Endothelial cell of umbilical vein (primary cell): ENCODE measurements at regions of chr3 and their contacts with region 1.

Region 1: GRCh38 chr3:194738254-194739093 is 52.8 kb downstream of the FAM43A start:
- DNase-seq: peak; percentile 76
- H3K4me3 ChIP-seq: no peak overlapping the region
- H3K27ac ChIP-seq: peak overlapping the region; percentile 76
- H3K4me1 ChIP-seq: peaks cover 44% of the 10 kb centered on the region
- H3K27me3 ChIP-seq: no peaks in the 10 kb centered on the region
- CTCF ChIP-seq: no peak
- POLR2A ChIP-seq: no peak

Region 2: DNA sequence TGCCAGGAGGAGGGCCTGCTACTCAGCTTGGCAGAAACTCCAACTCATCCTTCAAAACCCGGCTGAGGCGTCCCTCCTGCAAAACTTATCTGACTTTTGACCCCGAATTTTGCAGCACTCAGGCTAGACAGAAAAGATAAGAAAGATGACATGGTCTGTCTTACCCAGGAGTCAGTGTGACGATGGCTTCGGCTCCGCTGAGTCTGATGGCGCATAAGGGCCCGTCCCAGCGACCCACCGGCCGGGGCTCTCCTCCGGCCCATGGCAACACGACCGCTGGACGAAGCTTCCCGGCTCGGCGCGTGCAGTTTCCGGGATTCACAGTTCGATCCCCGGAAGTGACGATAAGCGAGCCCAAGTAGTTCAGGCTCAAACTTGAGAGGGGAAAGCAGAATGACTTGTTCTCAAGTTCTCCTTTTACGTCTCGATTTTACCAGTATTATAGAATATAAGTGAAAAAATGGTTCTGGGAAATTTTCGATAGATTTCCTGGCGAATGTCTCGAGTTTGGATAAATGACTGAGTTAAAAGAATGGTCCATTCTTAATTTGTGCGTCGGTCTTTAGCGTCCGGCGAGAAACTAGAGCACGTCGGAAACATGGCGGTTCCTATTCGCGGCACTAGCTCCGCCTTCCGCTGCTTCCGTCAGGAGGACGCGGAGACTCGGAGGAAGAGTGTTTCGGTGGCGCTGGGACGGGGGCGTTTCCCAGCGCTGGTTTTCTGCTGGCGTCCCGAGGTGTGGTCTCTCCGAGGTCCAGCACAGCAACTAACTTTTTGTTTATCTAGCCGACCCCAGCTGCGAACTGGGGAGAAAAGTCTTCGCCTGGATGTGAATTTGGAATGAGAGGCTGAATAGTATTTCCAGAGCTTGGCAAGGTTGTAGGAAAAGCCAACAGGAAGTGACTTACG is 66.3 kb before region 1 on chr3 and contains the start of gene LSG1:
- CTCF ChIA-PET with region 1: no interaction called
- POLR2A ChIA-PET with region 1: no interaction called
- dilution Hi-C with region 1: no loop called
- intact Hi-C with region 1: no loop called
- DNase-seq: peak; percentile 96
- H3K4me3 ChIP-seq: peak within 1 kb of the TSS; percentile 61 to 97 (median 64)
- H3K27ac ChIP-seq: peak within 1 kb of the TSS; percentile 93
- H3K4me1 ChIP-seq: peaks cover 15% of the 10 kb centered on the region
- H3K27me3 ChIP-seq: peaks cover 0 to 2% of the 10 kb centered on the region in 2 experiments
- CTCF ChIP-seq: no peak
- POLR2A ChIP-seq: peak; percentile 80
- total RNA-seq, gene LSG1: 48.3 and 52.7 TPM in 2 replicates

Region 3: DNA sequence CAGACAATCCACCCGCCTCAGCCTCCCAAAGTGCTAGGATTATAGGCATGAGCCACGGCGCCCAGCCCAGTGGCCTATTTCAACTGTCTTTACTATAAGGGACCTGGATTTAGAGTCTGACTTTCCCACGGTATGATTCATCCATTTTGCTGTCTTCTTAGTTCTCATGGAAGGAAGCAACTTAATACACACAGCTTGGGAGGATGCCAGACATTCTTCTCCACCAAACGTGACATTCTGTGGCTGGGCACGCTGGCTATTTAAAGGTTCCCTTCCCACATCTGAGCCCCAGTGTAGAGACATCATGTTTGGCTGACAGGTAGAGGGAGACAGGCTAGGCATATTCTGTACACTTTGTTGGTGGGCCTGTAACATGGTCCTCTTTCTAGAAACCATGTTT is 26.6 kb before region 1 on chr3:
- CTCF ChIA-PET with region 1: interaction called, 3 read pairs
- POLR2A ChIA-PET with region 1: no interaction called
- dilution Hi-C with region 1: no loop called
- intact Hi-C with region 1: loop called (anchors 1 kb)
- DNase-seq: peak; percentile 97
- H3K4me3 ChIP-seq: no peak overlapping the region
- H3K27ac ChIP-seq: peak overlapping the region; percentile 73
- H3K4me1 ChIP-seq: peaks cover 28% of the 10 kb centered on the region
- H3K27me3 ChIP-seq: no peaks in the 10 kb centered on the region
- CTCF ChIP-seq: no peak
- POLR2A ChIP-seq: no peak

Region 4: GRCh38 chr3:194749631-194750490 is 11.4 kb after region 1 on chr3:
- CTCF ChIA-PET with region 1: no interaction called
- POLR2A ChIA-PET with region 1: no interaction called
- dilution Hi-C with region 1: no loop called
- intact Hi-C with region 1: no loop called
- DNase-seq: peak; percentile 76
- H3K4me3 ChIP-seq: no peak overlapping the region
- H3K27ac ChIP-seq: no peak overlapping the region
- H3K4me1 ChIP-seq: no peaks in the 10 kb centered on the region
- H3K27me3 ChIP-seq: no peaks in the 10 kb centered on the region
- CTCF ChIP-seq: no peak
- POLR2A ChIP-seq: no peak

Region 5: DNA sequence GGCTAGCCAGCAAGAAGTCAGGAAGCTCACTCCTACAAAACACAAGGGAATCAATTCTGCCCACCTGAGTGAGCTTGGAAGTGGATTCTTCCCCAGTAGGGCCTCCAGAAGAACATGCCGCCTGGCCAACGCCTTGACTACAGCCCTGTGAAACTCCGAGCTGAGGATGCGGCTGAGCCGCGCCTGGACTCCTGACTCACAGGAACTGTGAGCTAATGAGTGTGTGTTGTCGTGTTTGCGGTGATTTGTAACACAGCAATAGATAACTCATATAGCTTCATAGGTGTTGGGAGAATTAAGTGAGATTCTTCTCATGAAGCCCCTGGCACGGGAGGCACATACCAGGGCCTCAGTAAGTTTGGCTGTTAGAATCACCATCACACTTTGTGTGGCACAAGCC is 95.0 kb after region 1 on chr3:
- CTCF ChIA-PET with region 1: no interaction called
- POLR2A ChIA-PET with region 1: no interaction called
- dilution Hi-C with region 1: no loop called
- intact Hi-C with region 1: loop called (anchors 2 kb)
- DNase-seq: peak; percentile 66
- H3K4me3 ChIP-seq: no peak overlapping the region
- H3K27ac ChIP-seq: peak overlapping the region; percentile 62
- H3K4me1 ChIP-seq: peaks cover 22% of the 10 kb centered on the region
- H3K27me3 ChIP-seq: no peaks in the 10 kb centered on the region
- CTCF ChIP-seq: no peak
- POLR2A ChIP-seq: no peak

Region 6: DNA sequence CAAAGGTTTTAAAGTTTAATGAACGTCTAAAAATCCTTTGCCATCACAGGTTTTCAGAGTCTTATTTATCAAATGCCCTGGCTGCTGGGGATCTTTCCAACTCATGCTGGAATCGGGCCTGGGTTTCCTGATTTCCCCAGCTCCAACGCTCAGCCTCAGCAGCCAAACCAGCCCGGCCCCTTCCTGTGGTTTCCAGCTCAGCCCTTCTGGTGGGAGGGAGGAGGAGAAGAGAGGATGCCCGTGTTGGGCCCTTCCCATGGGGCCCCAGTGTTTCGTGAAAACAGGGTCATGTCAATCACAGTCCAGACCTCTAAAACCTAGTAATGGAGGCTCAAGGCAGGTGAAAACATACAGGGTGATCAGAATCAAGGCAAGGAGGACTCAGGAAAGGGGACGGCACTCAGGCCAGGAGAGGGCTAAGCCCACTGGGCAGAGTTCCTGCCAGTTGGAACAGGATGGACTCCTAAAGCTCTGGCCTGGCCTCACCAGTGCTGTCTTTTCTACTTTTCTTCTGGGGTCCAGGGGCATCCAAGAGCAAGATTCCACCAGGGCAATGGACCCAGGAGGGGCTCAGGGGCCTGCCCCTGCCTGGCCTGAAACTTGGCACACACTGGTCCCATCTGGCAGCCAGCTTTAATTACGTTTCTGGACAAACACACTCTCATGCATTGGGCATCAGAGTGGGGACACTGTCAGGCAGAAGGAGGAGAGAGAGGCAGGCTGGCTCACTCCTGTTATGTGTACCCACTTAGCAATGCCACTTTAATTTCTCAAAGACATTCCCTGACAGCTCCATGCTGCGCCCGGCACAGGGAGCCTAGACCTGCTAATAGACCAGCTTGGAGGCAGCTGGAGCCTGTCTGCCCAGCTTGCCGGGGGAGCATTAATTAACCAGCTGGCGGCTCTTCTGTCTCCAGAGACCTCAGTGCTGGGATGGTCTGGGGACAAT is 141.8 kb after region 1 on chr3:
- CTCF ChIA-PET with region 1: no interaction called
- POLR2A ChIA-PET with region 1: interaction called, 3 read pairs
- dilution Hi-C with region 1: no loop called
- intact Hi-C with region 1: loop called (anchors 1 kb)
- DNase-seq: peak; percentile 80
- H3K4me3 ChIP-seq: no peak overlapping the region
- H3K27ac ChIP-seq: peak overlapping the region; percentile 54
- H3K4me1 ChIP-seq: peaks cover 28% of the 10 kb centered on the region
- H3K27me3 ChIP-seq: no peaks in the 10 kb centered on the region
- CTCF ChIP-seq: no peak
- POLR2A ChIP-seq: no peak

Region 7: DNA sequence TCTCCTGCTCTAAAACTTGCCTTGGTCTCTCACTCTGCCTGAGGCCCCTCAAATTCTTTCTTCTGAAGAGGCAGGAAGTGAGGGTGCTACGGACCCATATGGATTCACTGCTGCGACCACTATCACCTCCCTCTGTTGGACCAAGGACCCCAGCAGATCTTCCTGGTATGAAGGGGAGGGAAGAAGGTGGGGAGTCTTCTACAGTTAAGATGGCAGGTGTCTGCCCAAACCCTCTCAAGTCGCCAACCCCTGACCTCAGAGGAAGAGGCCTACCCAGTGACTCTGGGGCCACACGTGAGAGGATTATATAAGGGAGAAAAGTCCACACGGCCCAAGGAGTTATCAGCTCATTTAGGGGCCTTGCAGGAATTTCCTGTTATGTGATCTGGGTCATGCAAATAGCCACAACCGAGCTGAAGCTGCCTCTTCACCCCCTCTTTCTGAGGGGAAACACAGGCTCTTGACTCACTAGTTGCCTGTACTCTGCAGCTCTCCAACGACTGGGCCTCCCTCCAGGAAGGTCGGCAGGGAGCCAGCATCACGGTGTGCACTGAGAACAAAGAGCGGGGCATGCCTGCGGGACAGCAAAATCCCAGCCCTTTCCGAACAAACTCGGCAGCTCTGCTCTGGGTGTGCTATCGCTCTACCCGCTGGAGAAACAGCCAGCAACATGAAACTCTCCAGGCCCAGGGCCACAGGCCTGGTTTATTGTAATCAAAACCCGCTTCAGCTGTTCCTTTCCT is 416.5 kb after region 1 on chr3:
- CTCF ChIA-PET with region 1: no interaction called
- POLR2A ChIA-PET with region 1: interaction called, 3 read pairs
- dilution Hi-C with region 1: no loop called
- intact Hi-C with region 1: loop called (anchors 2 kb)
- DNase-seq: peak; percentile 100
- H3K4me3 ChIP-seq: no peak overlapping the region
- H3K27ac ChIP-seq: peak overlapping the region; percentile 95
- H3K4me1 ChIP-seq: peaks cover 86% of the 10 kb centered on the region
- H3K27me3 ChIP-seq: no peaks in the 10 kb centered on the region
- CTCF ChIP-seq: no peak
- POLR2A ChIP-seq: peak; percentile 80